ENCODE measurements at regions of chr7 and their contacts with region 1.

Region 1: DNA sequence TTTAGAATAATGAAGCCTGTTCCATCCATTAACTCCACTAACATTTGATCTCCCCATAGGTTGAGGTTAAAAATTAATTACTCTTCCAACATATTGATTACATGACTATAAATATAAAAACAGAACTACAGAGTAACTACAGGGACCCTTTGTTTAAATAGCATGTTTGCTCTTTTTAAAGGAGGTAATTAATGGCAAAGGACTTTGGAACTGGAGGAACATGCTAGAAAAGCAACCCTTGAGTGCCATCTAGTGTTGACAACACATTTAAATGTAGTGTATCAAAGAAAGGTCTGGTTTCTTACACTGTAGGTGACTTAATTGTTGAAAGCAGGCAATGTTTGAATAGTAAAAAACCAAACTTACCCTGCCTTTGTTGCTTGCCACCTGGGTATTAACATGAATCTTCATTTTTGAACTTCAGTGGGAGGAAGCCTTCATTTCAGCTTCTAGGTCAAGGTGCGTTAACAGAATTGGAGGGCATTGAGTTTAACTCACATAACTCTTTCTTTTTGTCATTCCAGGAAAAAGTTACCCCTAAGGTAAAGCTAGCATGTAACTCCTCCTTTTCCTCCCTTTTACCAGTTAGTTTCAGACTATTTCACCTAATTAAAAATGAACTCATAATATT is 52.6 kb upstream of the CAPZA2 start:
- DNase-seq: peak in 13 of 42 donors; percentile 25 to 72 (median 46)

Region 2: GRCh38 chr7:116258734-116259133 is 551.0 kb before region 1 on chr7:
- intact Hi-C with region 1: loop called (anchors 5 kb)
- DNase-seq: peak in 26 of 42 donors; percentile 6 to 81 (median 48)

Region 3: DNA sequence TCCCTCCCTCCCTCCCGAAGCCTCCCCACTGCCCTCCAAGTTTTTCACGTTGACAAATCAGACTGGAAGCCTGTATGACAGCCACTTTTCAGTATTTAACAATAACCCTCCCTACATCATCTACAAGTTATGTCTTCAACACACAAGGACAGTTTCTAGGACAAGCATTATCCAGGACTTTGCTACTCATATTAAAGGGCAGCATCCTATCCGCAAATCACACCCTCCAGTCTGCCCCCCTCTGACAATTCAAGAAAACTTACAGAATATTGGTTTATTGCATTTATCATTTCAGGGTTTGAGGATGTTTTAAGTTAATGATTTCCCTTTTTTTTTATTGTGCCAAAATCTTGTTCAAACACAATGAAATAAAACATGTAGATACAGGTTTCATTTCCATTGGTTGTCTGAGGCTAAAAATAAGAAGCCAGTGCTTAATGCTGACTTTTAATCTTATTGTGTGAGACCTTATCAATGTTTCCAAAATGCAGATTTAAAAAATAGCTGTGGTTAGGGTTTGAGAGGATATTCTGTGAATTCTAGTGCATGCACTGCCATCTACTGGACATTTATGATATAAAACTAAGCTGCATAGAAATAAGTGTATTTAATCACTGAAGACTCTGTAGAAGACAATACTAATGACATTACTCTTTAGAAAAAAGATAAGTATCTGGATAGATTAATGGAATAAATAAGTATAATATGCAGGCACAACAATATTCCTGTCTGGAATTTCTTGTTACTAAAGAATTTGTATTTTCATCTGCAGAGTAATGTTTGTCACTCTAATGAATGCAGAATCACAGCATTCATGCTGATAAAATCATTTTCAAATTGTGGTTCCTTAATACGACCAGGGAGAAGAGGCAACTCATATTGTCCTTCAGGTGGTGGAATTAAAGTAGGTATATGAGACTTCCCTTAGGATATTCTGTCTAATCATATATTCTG is 220.8 kb before region 1 on chr7:
- intact Hi-C with region 1: loop called (anchors 5 kb)
- DNase-seq: peak in 4 of 42 donors; percentile 16 to 49 (median 20)

Region 4: GRCh38 chr7:116671681-116672595 is 137.8 kb before region 1 on chr7 and contains the start of gene MET:
- intact Hi-C with region 1: loop called (anchors 5 kb)
- DNase-seq: peak; percentile 54 to 91 (median 74)

Region 5: GRCh38 chr7:116984917-116985316 is 175.2 kb after region 1 on chr7:
- intact Hi-C with region 1: no loop called
- DNase-seq: no peak

Region 6: GRCh38 chr7:117230276-117231046 is 420.7 kb after region 1 on chr7:
- intact Hi-C with region 1: no loop called
- DNase-seq: no peak

Region 7: DNA sequence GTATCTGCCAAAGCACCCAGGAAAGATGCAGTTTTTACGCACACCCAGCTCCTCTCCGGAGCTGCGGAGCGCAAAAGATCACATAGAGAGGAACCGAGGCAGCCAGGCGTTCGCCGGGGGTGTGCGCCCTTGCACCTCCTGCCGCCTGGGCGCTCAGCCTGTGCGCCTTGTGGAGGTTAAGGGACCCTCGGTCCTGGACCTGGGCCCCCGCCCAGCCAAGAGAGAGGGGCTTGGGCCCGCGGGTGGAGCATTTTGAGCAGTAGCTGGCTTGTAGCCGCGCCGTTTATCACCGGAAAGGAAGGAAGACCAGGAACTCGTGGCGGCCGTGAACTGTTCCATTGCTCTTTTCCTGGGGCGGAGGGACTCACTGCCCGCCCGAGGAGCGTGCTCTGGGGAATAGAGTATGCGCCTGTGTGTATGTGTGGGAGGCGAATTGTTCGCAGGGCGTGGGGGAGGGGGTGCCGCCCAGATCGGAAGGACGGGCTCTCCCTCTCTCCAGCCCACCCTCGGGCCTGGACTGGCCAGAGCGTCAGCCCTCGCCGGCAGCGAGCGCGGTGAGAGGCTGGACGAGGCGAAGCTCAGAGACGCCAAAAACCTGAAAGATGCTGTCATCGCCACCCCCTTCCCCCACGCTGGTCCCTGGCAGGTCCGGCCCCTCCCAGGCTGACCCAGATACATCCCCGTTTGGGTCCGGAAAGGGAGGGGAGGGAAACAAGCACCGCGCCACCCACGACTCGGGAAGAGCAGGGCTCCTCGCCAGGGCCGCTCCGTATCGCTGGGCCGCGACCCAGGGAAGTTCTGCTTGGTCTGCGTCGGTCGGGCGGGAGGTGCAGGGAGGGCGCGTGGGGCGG is 514.3 kb after region 1 on chr7:
- intact Hi-C with region 1: no loop called
- DNase-seq: peak in 30 of 42 donors; percentile 8 to 55 (median 34)